Motor neuron (in vitro differentiated cells): ENCODE measurements at regions of chr12 and their contacts with region 1.

Region 1: DNA sequence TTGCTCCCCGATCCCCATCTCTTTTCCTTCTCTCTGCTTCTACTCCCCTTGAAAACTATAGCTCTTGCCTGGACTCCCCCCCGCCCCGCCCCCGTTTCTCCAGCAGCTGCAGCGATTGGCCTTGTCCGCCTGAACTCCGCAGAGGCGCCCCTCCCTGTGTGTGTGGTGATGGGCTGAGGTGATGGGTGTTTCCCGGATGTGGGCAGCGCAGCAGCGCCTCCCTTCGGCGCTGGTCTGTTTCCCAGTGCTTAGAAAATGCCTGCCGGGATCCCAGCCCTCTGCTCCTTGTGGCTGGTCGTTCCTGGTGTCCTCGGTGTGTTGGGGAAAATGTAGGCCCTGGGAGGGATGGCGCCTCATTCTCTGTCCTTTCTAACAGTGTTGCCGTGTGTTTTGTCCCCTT is 43.3 kb downstream of the GALNT8 start:
- ATAC-seq: peak in 3 of 8 experiments; percentile 31 to 79 (median 70)
- H3K4me3 ChIP-seq: no peak overlapping the region
- H3K27ac ChIP-seq: no peak overlapping the region
- H3K4me1 ChIP-seq: no peaks in the 10 kb centered on the region

Region 2: DNA sequence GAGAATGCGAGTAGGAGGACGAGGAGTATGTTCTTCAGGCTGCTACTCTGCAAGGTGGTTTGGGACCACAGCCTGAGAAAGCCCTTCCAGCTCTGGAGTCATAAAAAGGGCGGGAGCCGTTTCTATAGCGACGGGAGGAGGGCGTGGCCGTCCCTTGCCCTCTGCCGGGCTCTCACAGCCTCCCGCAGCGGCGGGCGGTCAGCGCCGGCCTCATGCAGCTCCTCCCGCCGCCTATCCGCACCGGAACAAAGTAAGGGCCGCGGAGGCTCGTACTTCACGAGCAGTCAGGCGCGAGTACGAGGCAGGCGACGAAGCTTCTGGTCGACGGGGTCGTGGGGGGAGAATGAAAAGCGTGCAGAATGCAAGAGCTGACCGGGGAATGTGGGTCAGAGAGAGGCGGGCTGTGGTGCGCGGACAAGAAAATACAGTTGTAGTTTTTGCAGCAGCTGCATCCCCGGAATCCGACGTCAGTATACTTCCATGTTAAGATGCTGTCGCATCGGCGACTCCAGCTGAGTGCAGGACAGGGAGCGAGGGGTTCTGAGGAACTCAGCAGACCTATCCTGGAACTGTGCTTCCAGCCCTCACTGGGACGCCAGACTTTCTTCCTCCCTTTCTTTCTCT is 201.4 kb before region 1 on chr12 and contains the start of gene DYRK4:
- in situ Hi-C with region 1: loop called in 2 of 9 experiments (anchors 25 kb)
- ATAC-seq: peak; percentile 98 to 100 (median 99)
- H3K4me3 ChIP-seq: peak within 1 kb of the TSS; percentile 7 to 22 (median 13)
- H3K27ac ChIP-seq: peak within 1 kb of the TSS; percentile 6 to 60
- H3K4me1 ChIP-seq: peaks cover 10 to 16% of the 10 kb centered on the region in 2 donors
- total RNA-seq, gene DYRK4: 37.1 to 100 (median 55.8) TPM

Region 3: DNA sequence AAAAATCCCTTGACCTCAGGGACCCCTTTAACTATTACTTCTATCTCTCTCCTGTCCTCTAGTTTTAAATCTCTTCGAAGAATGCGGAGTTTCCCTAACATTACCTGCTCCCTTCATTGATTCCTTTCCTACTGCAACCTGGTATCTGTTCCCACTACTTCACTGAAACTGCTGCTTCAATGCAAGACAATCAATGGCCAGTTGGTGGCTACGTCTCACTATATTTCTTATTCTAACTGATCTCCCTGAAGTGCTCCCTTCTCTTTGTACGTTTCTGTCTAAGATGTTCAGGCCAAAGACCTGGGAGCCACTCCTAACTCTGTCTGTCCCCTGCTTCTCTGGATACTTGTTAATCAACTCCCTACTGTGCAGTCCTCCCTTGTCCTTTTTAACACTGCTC is 135.8 kb after region 1 on chr12:
- in situ Hi-C with region 1: no loop called
- ATAC-seq: no peak
- H3K4me3 ChIP-seq: no peak overlapping the region
- H3K27ac ChIP-seq: no peak overlapping the region
- H3K4me1 ChIP-seq: no peaks in the 10 kb centered on the region